ENCODE measurements at regions of chr6 and their contacts with region 1.

Region 1: GRCh38 chr6:86789779-86790411 is 147.4 kb upstream of the HTR1E start:
- DNase-seq: no peak
- H3K4me3 ChIP-seq: no peak overlapping the region
- H3K27ac ChIP-seq: no peak overlapping the region
- H3K4me1 ChIP-seq: no peaks in the 10 kb centered on the region
- H3K27me3 ChIP-seq: no peaks in the 10 kb centered on the region
- CTCF ChIP-seq: no peak
- POLR2A ChIP-seq: no peak

Region 2: DNA sequence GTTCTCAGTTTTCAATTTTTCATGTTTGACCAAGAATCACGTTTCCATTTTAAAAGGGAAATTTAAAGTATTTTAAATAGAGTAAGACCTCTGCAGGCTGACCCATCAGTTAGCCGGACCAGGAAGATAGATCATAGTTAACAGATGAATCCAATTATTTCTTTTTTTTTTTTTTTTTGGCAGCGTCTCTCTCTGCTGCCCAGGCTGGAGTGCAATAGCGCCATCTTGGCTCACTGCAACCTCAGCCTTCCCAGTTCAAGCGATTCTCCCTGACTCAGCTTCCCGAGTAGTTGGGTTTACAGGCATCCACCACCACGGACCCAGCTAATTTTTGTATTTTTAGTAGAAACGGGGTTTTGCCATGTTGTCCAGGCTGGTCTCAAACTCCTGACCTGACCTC is 1632.9 kb after region 1 on chr6:
- intact Hi-C with region 1: loop called (anchors 10 kb)
- DNase-seq: no peak
- H3K4me3 ChIP-seq: no peak overlapping the region
- H3K27ac ChIP-seq: no peak overlapping the region
- H3K4me1 ChIP-seq: no peaks in the 10 kb centered on the region
- H3K27me3 ChIP-seq: no peaks in the 10 kb centered on the region
- CTCF ChIP-seq: no peak
- POLR2A ChIP-seq: no peak